ENCODE measurements at regions of chr11 and their contacts with region 1.

Region 1: DNA sequence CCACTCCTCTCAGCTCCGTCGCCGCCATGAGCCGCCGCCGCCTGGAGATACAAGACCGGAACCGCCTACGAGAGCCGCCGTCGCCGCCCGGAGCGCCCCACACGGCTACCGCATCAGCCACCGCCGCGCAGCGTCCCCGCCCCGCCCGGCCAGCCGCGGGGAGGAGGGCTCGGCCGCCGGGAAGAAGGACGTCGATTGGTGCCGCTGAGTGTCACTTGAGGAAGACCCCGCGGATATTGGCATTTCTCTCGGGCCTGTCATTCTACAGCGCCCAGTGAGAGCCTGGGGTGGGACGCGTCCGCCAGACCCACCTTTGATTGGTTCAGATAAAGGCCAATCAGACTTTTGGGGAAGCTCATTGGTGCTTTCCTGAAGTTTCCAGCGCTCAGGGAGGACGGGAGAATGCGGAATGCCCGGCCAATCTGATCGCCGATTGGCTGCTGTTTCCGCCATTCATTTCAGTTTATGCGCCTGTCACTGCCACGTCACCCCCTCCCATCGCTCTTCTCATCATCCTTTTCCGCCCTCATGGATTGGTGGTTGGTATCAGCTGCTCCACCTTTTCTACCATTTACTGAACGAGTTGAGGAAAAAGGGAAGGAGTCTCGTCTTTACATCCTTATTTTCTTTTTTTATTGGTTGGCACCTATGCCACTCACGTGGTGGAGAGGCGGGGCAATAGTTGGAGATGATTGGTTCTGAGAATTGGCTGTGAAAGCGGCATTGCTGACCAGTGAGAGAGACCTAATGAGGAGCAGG is at the start of gene OSBP:
- DNase-seq: peak; percentile 100
- ATAC-seq: peak; percentile 87
- H3K4me3 ChIP-seq: peak within 1 kb of the TSS; percentile 82
- H3K27ac ChIP-seq: peak within 1 kb of the TSS; percentile 51
- H3K4me1 ChIP-seq: peaks cover 4% of the 10 kb centered on the region
- H3K27me3 ChIP-seq: no peaks in the 10 kb centered on the region
- CTCF ChIP-seq: peak; percentile 9; the same call in 1 of the 2 replicates
- POLR2A ChIP-seq: peak; percentile 74
- RAD21 ChIP-seq: no peak
- total RNA-seq, gene OSBP: 27.2 and 27.4 TPM in 2 replicates

Region 2: GRCh38 chr11:59158206-59159068 is 457.4 kb before region 1 on chr11:
- CTCF ChIA-PET with region 1: no interaction called
- POLR2A ChIA-PET with region 1: no interaction called
- dilution Hi-C with region 1: no loop called
- in situ Hi-C with region 1: no loop called
- intact Hi-C with region 1: no loop called
- DNase-seq: peak; percentile 75
- ATAC-seq: peak; percentile 97
- H3K4me3 ChIP-seq: no peak overlapping the region
- H3K27ac ChIP-seq: no peak overlapping the region
- H3K4me1 ChIP-seq: no peaks in the 10 kb centered on the region
- H3K27me3 ChIP-seq: peaks cover 7% of the 10 kb centered on the region
- CTCF ChIP-seq: peak; percentile 92
- POLR2A ChIP-seq: no peak
- RAD21 ChIP-seq: peak; percentile 89

Region 3: GRCh38 chr11:59560702-59561469 is 54.9 kb before region 1 on chr11:
- CTCF ChIA-PET with region 1: no interaction called
- POLR2A ChIA-PET with region 1: no interaction called
- dilution Hi-C with region 1: no loop called
- in situ Hi-C with region 1: no loop called
- intact Hi-C with region 1: loop called (anchors 2 kb)
- DNase-seq: peak; percentile 82
- ATAC-seq: peak; percentile 42
- H3K4me3 ChIP-seq: peak overlapping the region; percentile 96
- H3K27ac ChIP-seq: peak overlapping the region; percentile 91
- H3K4me1 ChIP-seq: peaks cover 2% of the 10 kb centered on the region; the same call in 1 of the 2 replicates
- H3K27me3 ChIP-seq: no peaks in the 10 kb centered on the region
- CTCF ChIP-seq: no peak
- POLR2A ChIP-seq: no peak
- RAD21 ChIP-seq: no peak

Region 4: GRCh38 chr11:59573234-59573633 is 42.6 kb before region 1 on chr11:
- CTCF ChIA-PET with region 1: interaction called, 3 read pairs
- POLR2A ChIA-PET with region 1: interaction called, 6 read pairs
- dilution Hi-C with region 1: no loop called
- in situ Hi-C with region 1: no loop called
- intact Hi-C with region 1: loop called (anchors 5 kb)
- DNase-seq: peak; percentile 94
- ATAC-seq: peak; percentile 94
- H3K4me3 ChIP-seq: no peak overlapping the region
- H3K27ac ChIP-seq: peak overlapping the region; percentile 96
- H3K4me1 ChIP-seq: peaks cover 16% of the 10 kb centered on the region
- H3K27me3 ChIP-seq: no peaks in the 10 kb centered on the region
- CTCF ChIP-seq: no peak
- POLR2A ChIP-seq: no peak
- RAD21 ChIP-seq: no peak

Region 5: DNA sequence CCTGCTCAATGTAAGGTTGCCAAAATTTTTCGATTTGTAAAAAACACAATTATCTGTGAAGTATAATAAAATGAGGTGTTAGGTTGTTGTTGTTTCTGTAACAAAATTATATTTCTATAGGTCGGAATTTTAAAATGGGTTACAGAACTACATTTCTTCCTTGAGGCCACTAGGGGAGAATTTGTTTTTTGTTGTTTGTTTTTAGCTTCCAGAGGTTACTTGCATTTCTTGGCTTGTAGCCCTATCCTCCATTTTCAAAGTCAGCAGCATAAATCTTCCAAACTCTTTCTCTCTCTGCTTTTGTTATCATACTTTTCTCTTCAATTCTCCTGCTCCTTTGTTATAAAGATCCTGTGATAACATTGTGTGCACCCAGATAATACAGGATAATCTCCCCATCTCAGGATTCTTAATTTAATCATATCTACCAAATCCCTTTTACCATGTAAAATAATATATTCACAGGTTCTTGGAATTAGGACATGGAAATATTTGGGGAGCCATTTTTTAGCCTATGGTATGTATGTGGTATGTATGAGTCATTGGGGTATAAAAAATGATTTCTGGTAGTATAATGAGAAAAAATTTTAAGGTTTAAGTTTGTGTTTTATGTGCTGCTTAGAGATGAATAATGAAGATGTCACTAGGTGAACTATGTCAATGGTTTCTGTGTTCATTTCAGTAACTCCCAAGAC is 62.4 kb after region 1 on chr11:
- CTCF ChIA-PET with region 1: no interaction called
- POLR2A ChIA-PET with region 1: no interaction called
- dilution Hi-C with region 1: no loop called
- in situ Hi-C with region 1: no loop called
- intact Hi-C with region 1: no loop called
- DNase-seq: no peak
- ATAC-seq: no peak
- H3K4me3 ChIP-seq: no peak overlapping the region
- H3K27ac ChIP-seq: no peak overlapping the region
- H3K4me1 ChIP-seq: no peaks in the 10 kb centered on the region
- H3K27me3 ChIP-seq: no peaks in the 10 kb centered on the region
- CTCF ChIP-seq: no peak
- POLR2A ChIP-seq: no peak
- RAD21 ChIP-seq: no peak

Region 6: DNA sequence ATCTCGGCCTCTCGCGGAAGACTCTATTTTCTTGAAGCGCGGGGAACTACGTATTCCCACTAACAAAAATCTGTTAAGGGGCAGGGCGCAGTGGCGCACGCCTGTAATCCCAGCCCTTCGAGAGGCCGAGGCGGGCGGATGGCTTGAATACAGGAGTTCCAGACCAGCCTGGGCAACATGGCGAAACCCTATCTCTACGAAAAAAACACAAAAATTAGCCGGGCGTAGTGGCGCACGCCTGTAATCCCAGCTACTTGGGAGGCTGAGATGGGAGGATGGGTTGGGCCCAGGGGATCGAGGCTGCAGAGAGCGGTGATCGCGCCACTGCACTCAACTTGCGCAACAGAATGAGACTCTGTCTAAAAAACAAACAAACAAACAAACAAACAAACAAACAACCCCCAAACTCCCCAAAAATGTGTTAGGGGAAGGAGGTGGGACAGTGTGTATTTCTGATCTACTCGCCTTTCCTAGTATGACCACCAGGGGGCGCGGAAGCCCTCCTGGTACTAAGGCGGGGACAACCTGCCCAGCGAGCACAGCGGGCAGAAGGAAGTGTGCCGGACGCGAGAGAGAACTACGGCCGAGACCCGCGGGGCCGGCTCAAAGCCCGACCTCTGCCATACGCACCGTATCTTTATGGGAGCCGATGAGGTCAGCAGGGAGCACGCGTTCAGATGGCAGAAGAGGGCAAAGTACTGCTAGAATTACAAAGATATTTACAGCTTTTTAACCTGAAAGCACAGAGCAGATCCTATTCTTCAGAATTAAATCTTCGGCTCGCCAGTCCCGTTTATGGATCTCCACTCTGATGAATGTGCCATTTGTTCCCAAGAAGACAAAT is 138.1 kb after region 1 on chr11:
- CTCF ChIA-PET with region 1: no interaction called
- POLR2A ChIA-PET with region 1: no interaction called
- dilution Hi-C with region 1: no loop called
- in situ Hi-C with region 1: no loop called
- intact Hi-C with region 1: no loop called
- DNase-seq: peak; percentile 63
- ATAC-seq: peak; percentile 65
- H3K4me3 ChIP-seq: peak overlapping the region; percentile 83
- H3K27ac ChIP-seq: no peak overlapping the region
- H3K4me1 ChIP-seq: peaks cover 5% of the 10 kb centered on the region
- H3K27me3 ChIP-seq: no peaks in the 10 kb centered on the region
- CTCF ChIP-seq: peak; percentile 90
- POLR2A ChIP-seq: no peak
- RAD21 ChIP-seq: peak; percentile 75

Region 7: GRCh38 chr11:61315260-61315659 is 1699.4 kb after region 1 on chr11:
- CTCF ChIA-PET with region 1: no interaction called
- POLR2A ChIA-PET with region 1: no interaction called
- dilution Hi-C with region 1: no loop called
- in situ Hi-C with region 1: loop called (anchors 25 kb)
- intact Hi-C with region 1: no loop called
- DNase-seq: no peak
- ATAC-seq: no peak
- H3K4me3 ChIP-seq: no peak overlapping the region
- H3K27ac ChIP-seq: no peak overlapping the region
- H3K4me1 ChIP-seq: no peaks in the 10 kb centered on the region
- H3K27me3 ChIP-seq: no peaks in the 10 kb centered on the region
- CTCF ChIP-seq: no peak
- POLR2A ChIP-seq: no peak
- RAD21 ChIP-seq: no peak

Measured in IMR-90 (cell line).